Activated B cell treated with CpG ODN at 0.5 μM for 24 hours (primary cell): ENCODE measurements at regions of chr19 and their contacts with region 1.

Region 1: DNA sequence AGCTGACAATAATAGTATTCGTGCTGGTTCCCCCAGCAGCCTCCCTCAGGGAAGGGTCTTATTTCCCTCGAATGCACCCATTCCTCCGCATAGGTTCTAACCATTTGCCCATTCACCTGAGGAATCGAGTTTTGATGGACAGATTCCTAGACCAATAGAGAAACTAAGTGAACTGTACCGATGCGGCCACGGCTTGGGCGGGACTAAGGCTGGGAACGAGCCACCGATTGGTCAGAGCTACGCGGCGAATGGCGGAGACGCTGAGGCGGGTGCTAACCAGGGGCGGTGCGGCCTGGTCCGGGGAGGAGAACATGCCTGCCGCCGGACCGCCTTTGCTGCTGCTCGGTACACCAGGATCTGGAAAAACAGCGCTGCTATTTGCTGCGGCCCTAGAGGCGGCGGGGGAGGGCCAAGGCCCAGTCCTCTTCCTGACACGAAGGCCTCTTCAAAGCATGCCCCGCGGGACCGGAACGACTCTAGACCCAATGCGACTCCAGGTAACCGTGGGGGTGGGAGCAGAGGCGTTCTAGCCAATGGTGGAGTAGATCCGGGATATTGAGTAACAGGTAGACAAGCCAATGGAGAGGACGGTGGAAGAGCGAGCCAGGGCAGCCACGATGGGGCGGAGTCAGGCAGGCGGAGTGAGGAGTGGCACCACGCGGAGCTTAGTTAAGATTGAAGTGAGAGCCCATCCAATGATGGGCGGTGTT is at the start of gene SWSAP1:
- DNase-seq: peak; percentile 93
- ATAC-seq: peak; percentile 89
- H3K4me3 Mint-ChIP-seq: no peak within 1 kb of the TSS
- H3K27ac Mint-ChIP-seq: no peak within 1 kb of the TSS
- H3K4me1 Mint-ChIP-seq: peaks cover 17% of the 10 kb centered on the region
- H3K27me3 Mint-ChIP-seq: no peaks in the 10 kb centered on the region
- CTCF ChIP-seq: no peak
- total RNA-seq, gene SWSAP1: 4.3 and 5.1 TPM in 2 replicates

Region 2: DNA sequence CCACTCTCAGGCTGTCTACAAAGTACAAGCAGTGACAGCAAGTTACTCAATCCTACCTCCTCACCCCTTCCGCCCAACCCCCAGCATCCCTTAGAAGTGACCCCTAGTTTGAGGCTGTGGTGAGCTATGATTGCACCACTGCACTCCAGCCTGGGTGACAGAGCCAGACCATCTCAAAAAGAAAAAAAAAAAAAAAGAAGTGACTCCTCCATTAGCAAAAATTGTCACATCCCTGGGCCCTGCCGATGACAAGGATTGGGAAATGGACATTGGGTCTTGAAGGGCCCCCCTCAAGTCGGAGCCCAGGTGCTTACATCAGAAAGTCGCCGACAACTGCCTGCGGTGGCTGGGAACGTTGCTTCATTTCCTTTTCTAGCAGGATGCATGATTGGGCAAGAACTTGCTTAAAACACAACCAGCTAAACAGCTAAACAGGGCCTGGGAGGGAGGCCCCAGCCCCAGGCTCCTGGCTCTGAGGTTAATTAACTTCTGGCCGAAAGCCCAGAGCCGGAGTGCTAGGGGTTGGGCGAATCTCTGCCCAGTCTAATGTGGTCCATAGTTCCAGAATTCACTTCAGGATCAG is 50.4 kb before region 1 on chr19:
- CTCF ChIA-PET with region 1: no interaction called
- POLR2A ChIA-PET with region 1: interaction called, 15 read pairs
- intact Hi-C with region 1: no loop called
- DNase-seq: no peak
- ATAC-seq: peak; percentile 80
- H3K4me3 Mint-ChIP-seq: peak overlapping the region; percentile 56
- H3K27ac Mint-ChIP-seq: peak overlapping the region; percentile 76
- H3K4me1 Mint-ChIP-seq: peaks cover 45% of the 10 kb centered on the region
- H3K27me3 Mint-ChIP-seq: no peaks in the 10 kb centered on the region
- CTCF ChIP-seq: no peak

Region 3: GRCh38 chr19:11339254-11340098 is 35.1 kb before region 1 on chr19 and contains the start of gene RAB3D:
- CTCF ChIA-PET with region 1: no interaction called
- POLR2A ChIA-PET with region 1: interaction called, 13 read pairs
- intact Hi-C with region 1: no loop called
- DNase-seq: peak; percentile 75
- ATAC-seq: peak; percentile 99
- H3K4me3 Mint-ChIP-seq: peak within 1 kb of the TSS; percentile 81
- H3K27ac Mint-ChIP-seq: no peak within 1 kb of the TSS
- H3K4me1 Mint-ChIP-seq: peaks cover 26% of the 10 kb centered on the region
- H3K27me3 Mint-ChIP-seq: no peaks in the 10 kb centered on the region
- CTCF ChIP-seq: no peak
- total RNA-seq, gene RAB3D: 4.5 and 6.2 TPM in 2 replicates

Region 4: GRCh38 chr19:11346092-11346940 is 28.3 kb before region 1 on chr19 and contains the starts of genes CCDC159 and TMEM205:
- CTCF ChIA-PET with region 1: interaction called, 4 read pairs
- POLR2A ChIA-PET with region 1: interaction called, 65 read pairs
- intact Hi-C with region 1: loop called (anchors 1 kb)
- DNase-seq: peak; percentile 93
- ATAC-seq: peak; percentile 95
- H3K4me3 Mint-ChIP-seq: peak within 1 kb of the TSS; percentile 98
- H3K27ac Mint-ChIP-seq: peak within 1 kb of the TSS; percentile 93
- H3K4me1 Mint-ChIP-seq: peaks cover 30% of the 10 kb centered on the region
- H3K27me3 Mint-ChIP-seq: no peaks in the 10 kb centered on the region
- CTCF ChIP-seq: no peak
- total RNA-seq, gene CCDC159: 27.6 and 32.1 TPM in 2 replicates
- total RNA-seq, gene TMEM205: 61.8 and 68.1 TPM in 2 replicates

Region 5: GRCh38 chr19:11355160-11356073 is 19.2 kb before region 1 on chr19 and contains the start of gene PLPPR2:
- CTCF ChIA-PET with region 1: no interaction called
- POLR2A ChIA-PET with region 1: interaction called, 7 read pairs
- intact Hi-C with region 1: loop called (anchors 1 kb)
- DNase-seq: peak; percentile 70
- ATAC-seq: peak; percentile 93
- H3K4me3 Mint-ChIP-seq: peak within 1 kb of the TSS; percentile 67
- H3K27ac Mint-ChIP-seq: no peak within 1 kb of the TSS
- H3K4me1 Mint-ChIP-seq: peaks cover 11% of the 10 kb centered on the region
- H3K27me3 Mint-ChIP-seq: peaks cover 12% of the 10 kb centered on the region
- CTCF ChIP-seq: no peak
- total RNA-seq, gene PLPPR2: 1.5 and 2.2 TPM in 2 replicates

Region 6: DNA sequence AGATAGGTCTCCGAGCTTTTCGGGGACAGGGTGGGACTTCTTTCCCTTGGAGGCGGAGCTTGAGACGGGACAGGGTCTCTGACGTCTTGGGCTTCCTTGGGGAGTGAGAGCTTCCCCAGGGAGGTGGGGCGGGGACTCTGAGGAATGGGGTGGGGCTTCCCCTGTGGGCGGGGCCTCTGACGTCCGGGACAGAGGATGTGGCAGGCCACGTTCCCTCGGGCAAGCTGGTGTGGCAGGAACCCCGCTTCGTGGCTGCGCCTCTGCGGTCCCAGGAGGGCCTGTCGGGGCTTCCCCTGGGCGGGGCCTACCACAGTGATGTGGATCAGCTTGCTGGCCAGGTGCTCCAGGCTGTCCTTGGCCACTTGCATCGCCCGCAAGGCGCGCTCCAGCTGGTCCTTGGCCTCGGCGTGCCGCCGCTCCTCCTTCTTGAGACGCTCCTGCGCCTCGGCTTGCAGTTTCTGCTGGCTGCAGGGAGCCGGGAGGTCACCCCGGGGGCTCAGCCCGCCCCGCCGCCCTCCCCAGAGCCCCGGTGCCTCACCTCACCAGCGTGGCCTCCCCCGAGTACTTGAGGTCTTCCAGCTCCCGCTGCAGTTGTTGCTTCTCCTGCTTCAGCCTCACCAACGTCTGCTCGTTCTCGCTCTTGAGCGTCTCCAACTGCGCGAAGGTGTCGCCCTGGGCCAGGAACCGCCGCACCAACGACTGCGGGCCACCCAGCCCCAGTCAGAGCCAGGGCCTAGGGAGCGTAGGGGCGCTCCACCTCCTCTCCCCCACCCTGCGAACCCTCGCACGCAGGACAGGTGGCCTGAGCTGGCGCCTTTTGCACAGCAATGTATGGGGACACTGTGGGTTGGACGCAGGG is 47.8 kb after region 1 on chr19:
- CTCF ChIA-PET with region 1: no interaction called
- POLR2A ChIA-PET with region 1: interaction called, 57 read pairs
- intact Hi-C with region 1: loop called (anchors 1 kb)
- DNase-seq: peak; percentile 89
- ATAC-seq: peak; percentile 84
- H3K4me3 Mint-ChIP-seq: peak overlapping the region; percentile 81
- H3K27ac Mint-ChIP-seq: peak overlapping the region; percentile 66
- H3K4me1 Mint-ChIP-seq: peaks cover 54% of the 10 kb centered on the region
- H3K27me3 Mint-ChIP-seq: peaks cover 18% of the 10 kb centered on the region
- CTCF ChIP-seq: no peak

Region 7: GRCh38 chr19:11482384-11483050 is 107.9 kb after region 1 on chr19:
- CTCF ChIA-PET with region 1: interaction called, 27 read pairs
- POLR2A ChIA-PET with region 1: interaction called, 21 read pairs
- intact Hi-C with region 1: no loop called
- DNase-seq: peak; percentile 85
- ATAC-seq: peak; percentile 72
- H3K4me3 Mint-ChIP-seq: peak overlapping the region; percentile 74
- H3K27ac Mint-ChIP-seq: peak overlapping the region; percentile 41
- H3K4me1 Mint-ChIP-seq: peaks cover 30% of the 10 kb centered on the region
- H3K27me3 Mint-ChIP-seq: peaks cover 23% of the 10 kb centered on the region
- CTCF ChIP-seq: no peak